Right lobe of liver (tissue), 6 donors: ENCODE measurements at regions of chr16 and their contacts with region 1.

Region 1: GRCh38 chr16:83887081-83887480 is 11.8 kb upstream of the MLYCD start:
- DNase-seq: no peak
- ATAC-seq: no peak
- H3K4me3 ChIP-seq: no peak overlapping the region
- H3K27ac ChIP-seq: no peak overlapping the region
- H3K4me1 ChIP-seq: no peaks in the 10 kb centered on the region
- H3K27me3 ChIP-seq: no peaks in the 10 kb centered on the region
- CTCF ChIP-seq: no peak
- POLR2A ChIP-seq: no peak

Region 2: GRCh38 chr16:83689385-83689831 is 197.7 kb before region 1 on chr16:
- intact Hi-C with region 1: no loop called
- DNase-seq: no peak
- ATAC-seq: peak in 1 of 4 donors; percentile 37
- H3K4me3 ChIP-seq: no peak overlapping the region
- H3K27ac ChIP-seq: no peak overlapping the region
- H3K4me1 ChIP-seq: no peaks in the 10 kb centered on the region
- H3K27me3 ChIP-seq: no peaks in the 10 kb centered on the region
- CTCF ChIP-seq: no peak
- POLR2A ChIP-seq: no peak

Region 3: DNA sequence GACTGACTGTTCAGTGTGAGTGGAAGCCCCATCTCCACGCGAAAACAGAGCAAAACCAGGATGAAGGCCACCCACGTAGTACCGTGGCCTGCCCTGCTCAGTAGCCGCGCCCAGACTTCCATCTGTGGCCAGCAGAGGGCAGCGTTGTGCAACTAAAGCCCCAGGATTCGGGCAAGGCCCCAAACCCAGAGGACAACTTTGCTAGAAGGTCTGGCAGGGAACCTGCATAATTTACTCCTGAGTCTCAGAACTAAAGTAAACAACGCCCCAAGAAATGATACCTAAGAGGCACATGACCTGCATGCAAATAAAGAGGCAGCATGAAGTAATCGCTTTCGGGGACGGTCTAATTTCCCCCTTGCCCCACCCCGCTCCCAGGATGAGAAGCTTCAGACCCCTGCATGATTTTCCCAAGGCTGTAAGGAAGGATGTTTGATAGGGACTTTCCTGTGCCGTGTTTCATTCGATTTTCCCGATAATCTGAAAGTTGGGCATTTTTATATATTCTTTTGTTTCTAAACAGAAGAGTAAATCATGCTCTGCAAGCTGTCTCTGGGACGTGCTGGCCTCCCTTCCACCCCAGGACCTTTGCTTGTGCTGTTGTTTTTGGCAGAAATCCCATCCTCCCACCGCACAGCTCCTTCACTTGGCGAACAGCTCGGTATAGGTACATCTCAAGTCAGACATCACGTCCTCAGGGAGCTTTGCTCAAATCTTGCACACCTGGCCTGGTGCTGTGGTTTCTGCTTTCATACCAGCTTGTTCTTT is 60.8 kb before region 1 on chr16:
- intact Hi-C with region 1: loop called in 1 of 2 experiments (anchors 10 kb)
- DNase-seq: peak; percentile 72 to 81 (median 79)
- ATAC-seq: peak; percentile 94 to 100 (median 96)
- H3K4me3 ChIP-seq: no peak overlapping the region
- H3K27ac ChIP-seq: no peak overlapping the region
- H3K4me1 ChIP-seq: peaks cover 0 to 2% (median 0%) of the 10 kb centered on the region in 4 donors
- H3K27me3 ChIP-seq: no peaks in the 10 kb centered on the region
- CTCF ChIP-seq: peak; percentile 76 to 95 (median 88)
- POLR2A ChIP-seq: no peak

Region 4: GRCh38 chr16:83933885-83934683 is 47.0 kb after region 1 on chr16:
- intact Hi-C with region 1: no loop called
- DNase-seq: peak in 1 of 3 donors; percentile 47
- ATAC-seq: no peak
- H3K4me3 ChIP-seq: no peak overlapping the region
- H3K27ac ChIP-seq: no peak overlapping the region
- H3K4me1 ChIP-seq: peaks cover 0 to 12% (median 4%) of the 10 kb centered on the region in 4 donors
- H3K27me3 ChIP-seq: no peaks in the 10 kb centered on the region
- CTCF ChIP-seq: no peak
- POLR2A ChIP-seq: no peak